IMR-90 (cell line): ENCODE measurements at regions of chr13 and their contacts with region 1.

Region 1: GRCh38 chr13:23375001-23375971 is 58.2 kb downstream of the SACS start:
- DNase-seq: peak; percentile 92
- ATAC-seq: peak; percentile 89
- H3K4me3 ChIP-seq: peak overlapping the region; percentile 97
- H3K27ac ChIP-seq: peak overlapping the region; percentile 99
- H3K4me1 ChIP-seq: peaks cover 26% of the 10 kb centered on the region
- H3K27me3 ChIP-seq: no peaks in the 10 kb centered on the region
- CTCF ChIP-seq: 0 out of 2 replicates have a peak, but pooled peaks have one; percentile 19
- POLR2A ChIP-seq: peak; percentile 82
- RAD21 ChIP-seq: no peak

Region 2: DNA sequence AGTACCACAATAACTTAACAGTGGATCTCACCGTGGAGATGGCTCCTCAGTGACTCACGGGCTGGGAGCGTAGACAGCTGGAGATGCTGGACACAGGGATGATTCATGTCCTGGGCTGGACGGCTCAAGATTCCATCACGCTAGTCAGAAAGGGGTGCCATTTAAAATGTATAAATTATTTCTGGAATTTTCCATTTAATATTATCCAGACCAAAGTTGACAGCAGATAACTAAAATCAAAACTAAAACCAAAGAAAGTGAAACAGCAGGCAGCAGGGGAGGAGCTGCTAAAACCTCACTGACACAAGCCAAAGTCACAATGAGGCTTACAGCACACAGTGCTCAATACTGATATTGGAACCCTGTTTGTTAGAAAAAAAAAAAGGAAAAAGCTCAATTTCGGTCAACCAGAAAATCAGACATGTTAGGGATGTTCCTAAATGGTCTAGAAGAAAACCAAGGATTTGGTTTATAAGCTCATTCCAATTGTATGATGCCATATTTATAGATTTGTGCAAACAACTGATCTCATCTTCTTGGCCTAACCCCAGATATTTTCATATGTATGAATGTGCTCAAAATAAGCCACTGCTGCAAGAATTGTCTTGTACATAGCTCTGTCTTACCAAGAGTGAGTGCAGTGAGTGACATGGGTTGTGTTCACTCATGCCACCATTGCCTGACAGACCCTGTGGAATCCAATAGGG is 53.6 kb before region 1 on chr13:
- CTCF ChIA-PET with region 1: no interaction called
- POLR2A ChIA-PET with region 1: no interaction called
- dilution Hi-C with region 1: no loop called
- in situ Hi-C with region 1: no loop called
- intact Hi-C with region 1: no loop called
- DNase-seq: peak; percentile 94
- ATAC-seq: peak; percentile 82
- H3K4me3 ChIP-seq: peak overlapping the region; percentile 32; the same call in 1 of the 2 replicates
- H3K27ac ChIP-seq: peak overlapping the region; percentile 97
- H3K4me1 ChIP-seq: peaks cover 20% of the 10 kb centered on the region
- H3K27me3 ChIP-seq: no peaks in the 10 kb centered on the region
- CTCF ChIP-seq: no peak
- POLR2A ChIP-seq: peak; percentile 36; the same call in 1 of the 2 replicates
- RAD21 ChIP-seq: no peak

Region 3: GRCh38 chr13:23447927-23448326 is 72.6 kb after region 1 on chr13:
- CTCF ChIA-PET with region 1: no interaction called
- POLR2A ChIA-PET with region 1: no interaction called
- dilution Hi-C with region 1: no loop called
- in situ Hi-C with region 1: no loop called
- intact Hi-C with region 1: loop called (anchors 5 kb)
- DNase-seq: peak; percentile 96
- ATAC-seq: peak; percentile 96
- H3K4me3 ChIP-seq: no peak overlapping the region
- H3K27ac ChIP-seq: peak overlapping the region; percentile 83
- H3K4me1 ChIP-seq: peaks cover 4% of the 10 kb centered on the region; the same call in 1 of the 2 replicates
- H3K27me3 ChIP-seq: no peaks in the 10 kb centered on the region
- CTCF ChIP-seq: no peak
- POLR2A ChIP-seq: no peak
- RAD21 ChIP-seq: no peak

Region 4: DNA sequence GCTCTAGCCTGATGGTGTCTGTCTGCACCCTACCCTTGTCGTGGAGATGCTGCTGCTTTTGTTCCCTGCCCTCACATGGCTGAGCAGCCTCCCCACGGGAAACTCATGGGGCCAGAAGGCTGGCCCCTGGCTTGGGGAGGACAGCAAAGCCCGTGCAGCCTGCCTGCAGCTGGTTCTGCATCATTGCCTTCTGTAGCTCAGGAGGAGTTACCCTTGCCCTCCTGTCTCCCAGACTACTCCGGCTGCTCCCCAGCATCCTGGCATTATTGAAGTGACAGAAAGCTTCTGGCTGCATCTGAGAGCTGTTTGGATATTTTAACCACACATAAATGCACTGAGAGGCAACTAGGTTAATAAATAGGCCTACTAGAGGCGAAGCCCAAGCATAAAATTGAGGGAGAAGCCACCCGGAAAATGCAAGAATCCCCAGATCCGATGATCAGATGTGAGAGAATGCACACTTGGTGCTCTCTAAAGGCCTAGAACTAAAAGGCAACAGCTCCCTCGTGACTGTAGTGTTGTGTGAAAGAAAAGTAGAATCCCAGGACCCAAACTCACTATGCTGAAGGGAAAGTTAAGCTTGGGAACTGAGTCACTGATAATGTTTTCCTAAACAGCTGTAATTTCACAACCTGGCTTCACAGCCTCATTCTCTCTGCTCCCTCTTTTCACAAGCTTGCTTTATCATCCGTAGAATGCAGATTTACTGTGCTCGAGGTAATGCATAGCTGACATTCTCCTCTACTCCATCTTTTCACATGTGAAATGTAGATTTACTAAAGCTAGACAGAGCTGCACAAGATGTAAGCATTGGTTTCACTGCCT is 305.8 kb after region 1 on chr13:
- CTCF ChIA-PET with region 1: no interaction called
- POLR2A ChIA-PET with region 1: no interaction called
- dilution Hi-C with region 1: no loop called
- in situ Hi-C with region 1: no loop called
- intact Hi-C with region 1: loop called (anchors 10 kb)
- DNase-seq: peak; percentile 91
- ATAC-seq: peak; percentile 60
- H3K4me3 ChIP-seq: no peak overlapping the region
- H3K27ac ChIP-seq: peak overlapping the region; percentile 96
- H3K4me1 ChIP-seq: peaks cover 34% of the 10 kb centered on the region
- H3K27me3 ChIP-seq: no peaks in the 10 kb centered on the region
- CTCF ChIP-seq: no peak
- POLR2A ChIP-seq: no peak
- RAD21 ChIP-seq: no peak

Region 5: DNA sequence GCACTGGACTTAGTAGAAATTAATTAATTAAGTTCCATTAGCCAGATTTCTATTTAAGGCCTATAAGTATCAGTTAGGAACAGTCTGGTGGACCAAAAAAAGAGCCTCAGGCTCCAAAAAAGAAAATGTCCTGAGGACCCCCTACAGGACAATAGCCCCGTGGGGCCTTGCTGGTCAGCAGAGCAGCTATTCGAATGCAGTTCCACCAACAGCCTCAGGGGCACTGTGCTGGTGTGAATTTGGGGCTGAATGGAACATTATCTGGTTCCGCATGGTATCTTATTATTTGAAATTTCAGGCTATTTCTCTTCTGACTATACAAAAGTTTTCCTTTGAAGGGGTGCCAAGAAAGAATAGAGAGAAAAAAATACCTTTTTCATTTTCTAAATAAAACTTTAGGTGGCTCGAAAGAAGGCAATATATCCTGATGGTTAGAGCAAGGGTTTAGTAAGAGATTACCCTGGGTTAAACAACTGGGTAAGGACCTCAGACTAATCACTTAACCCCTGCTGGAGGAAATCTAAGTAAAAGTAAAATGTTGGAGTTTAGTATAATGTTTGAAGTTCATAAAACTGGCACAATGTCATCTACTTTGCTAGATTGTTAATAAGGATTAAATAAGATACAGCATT is 366.7 kb after region 1 on chr13:
- CTCF ChIA-PET with region 1: no interaction called
- POLR2A ChIA-PET with region 1: no interaction called
- dilution Hi-C with region 1: no loop called
- in situ Hi-C with region 1: no loop called
- intact Hi-C with region 1: no loop called
- DNase-seq: no peak
- ATAC-seq: no peak
- H3K4me3 ChIP-seq: no peak overlapping the region
- H3K27ac ChIP-seq: no peak overlapping the region
- H3K4me1 ChIP-seq: peaks cover under 1% of the 10 kb centered on the region; the same call in 1 of the 2 replicates
- H3K27me3 ChIP-seq: no peaks in the 10 kb centered on the region
- CTCF ChIP-seq: peak; percentile 27; the same call in 1 of the 2 replicates
- POLR2A ChIP-seq: no peak
- RAD21 ChIP-seq: 0 out of 2 replicates have a peak, but pooled peaks have one; percentile 3

Region 6: GRCh38 chr13:23888658-23889614 is 513.6 kb after region 1 on chr13 and contains the start of gene MIPEP:
- CTCF ChIA-PET with region 1: no interaction called
- POLR2A ChIA-PET with region 1: no interaction called
- dilution Hi-C with region 1: no loop called
- in situ Hi-C with region 1: loop called (anchors 25 kb)
- intact Hi-C with region 1: no loop called
- DNase-seq: peak; percentile 95
- ATAC-seq: peak; percentile 94
- H3K4me3 ChIP-seq: peak within 1 kb of the TSS; percentile 78
- H3K27ac ChIP-seq: peak within 1 kb of the TSS; percentile 79
- H3K4me1 ChIP-seq: no peaks in the 10 kb centered on the region
- H3K27me3 ChIP-seq: no peaks in the 10 kb centered on the region
- CTCF ChIP-seq: peak; percentile 79
- POLR2A ChIP-seq: peak; percentile 82
- RAD21 ChIP-seq: peak; percentile 11
- total RNA-seq, gene MIPEP: 21.5 and 22.2 TPM in 2 replicates